HEK293 (cell line): ENCODE measurements at regions of chr1 and their contacts with region 1.

Region 1: DNA sequence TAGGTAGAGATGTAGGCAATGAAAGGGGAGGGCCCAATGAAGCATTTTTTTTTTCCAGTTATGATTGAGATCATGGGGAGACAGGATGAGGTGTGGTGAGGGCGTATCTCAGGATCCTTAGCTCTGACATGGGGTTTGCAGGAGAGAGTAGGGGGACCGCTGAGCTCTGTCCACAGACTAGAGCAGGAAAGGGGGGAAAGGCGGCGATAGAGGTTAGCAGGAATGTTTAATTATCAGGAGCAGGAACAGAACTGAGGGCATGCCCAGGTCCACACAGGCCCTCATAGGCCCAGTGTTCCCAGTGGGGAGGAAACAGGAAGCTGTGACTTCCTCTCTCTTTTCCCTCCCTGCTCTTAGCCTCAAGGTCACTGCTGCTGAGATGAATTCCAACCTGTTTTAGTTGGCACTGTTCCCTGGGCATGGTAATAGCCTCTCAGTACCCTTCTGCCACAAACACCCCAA is 876 bp upstream of the RXFP4 start:
- H3K4me3 ChIP-seq: no peak overlapping the region
- H3K27ac ChIP-seq: peak overlapping the region; percentile 81
- H3K4me1 ChIP-seq: peaks cover 19% of the 10 kb centered on the region
- CTCF ChIP-seq: no peak

Region 2: GRCh38 chr1:155978325-155978972 is 37.9 kb after region 1 on chr1 and contains the start of gene ARHGEF2:
- CTCF ChIA-PET with region 1: interaction called, 24 read pairs
- POLR2A ChIA-PET with region 1: interaction called, 12 read pairs
- H3K4me3 ChIP-seq: peak within 1 kb of the TSS; percentile 91
- H3K27ac ChIP-seq: peak within 1 kb of the TSS; percentile 97
- H3K4me1 ChIP-seq: peaks cover 36% of the 10 kb centered on the region
- CTCF ChIP-seq: peak; percentile 68; the same call in 1 of the 2 replicates

Region 3: DNA sequence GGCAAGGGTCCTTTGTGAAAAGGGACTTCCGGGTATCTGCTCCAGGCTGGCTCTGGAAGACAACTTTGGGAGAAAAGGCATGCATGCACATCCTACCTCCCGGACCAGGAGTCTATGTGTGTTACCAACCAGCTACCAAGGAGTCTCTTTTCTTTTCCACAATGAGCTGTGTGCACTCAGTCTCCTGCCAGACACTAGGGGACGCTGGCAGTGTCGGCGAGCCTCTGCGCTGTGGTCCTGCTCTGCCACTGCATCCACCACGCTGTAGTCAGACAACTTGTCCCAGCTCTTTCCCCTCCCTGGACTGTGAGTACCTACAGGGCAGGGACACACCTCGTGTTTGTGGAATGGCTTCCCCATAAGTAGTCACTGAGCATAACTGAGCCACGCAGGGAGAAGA is 85.3 kb after region 1 on chr1:
- CTCF ChIA-PET with region 1: interaction called, 10 read pairs
- POLR2A ChIA-PET with region 1: no interaction called
- H3K4me3 ChIP-seq: no peak overlapping the region
- H3K27ac ChIP-seq: no peak overlapping the region
- H3K4me1 ChIP-seq: no peaks in the 10 kb centered on the region
- CTCF ChIP-seq: peak; percentile 86